Dorsolateral prefrontal cortex (tissue), 120 donors: ENCODE measurements at regions of chr17 and their contacts with region 1.

Region 1: GRCh38 chr17:76296186-76296585 is 11.9 kb downstream of the QRICH2 start:
- DNase-seq: no peak
- H3K4me3 ChIP-seq: no peak overlapping the region
- H3K27ac ChIP-seq: no peak overlapping the region
- H3K27me3 ChIP-seq: no peaks in the 10 kb centered on the region
- CTCF ChIP-seq: no peak

Region 2: DNA sequence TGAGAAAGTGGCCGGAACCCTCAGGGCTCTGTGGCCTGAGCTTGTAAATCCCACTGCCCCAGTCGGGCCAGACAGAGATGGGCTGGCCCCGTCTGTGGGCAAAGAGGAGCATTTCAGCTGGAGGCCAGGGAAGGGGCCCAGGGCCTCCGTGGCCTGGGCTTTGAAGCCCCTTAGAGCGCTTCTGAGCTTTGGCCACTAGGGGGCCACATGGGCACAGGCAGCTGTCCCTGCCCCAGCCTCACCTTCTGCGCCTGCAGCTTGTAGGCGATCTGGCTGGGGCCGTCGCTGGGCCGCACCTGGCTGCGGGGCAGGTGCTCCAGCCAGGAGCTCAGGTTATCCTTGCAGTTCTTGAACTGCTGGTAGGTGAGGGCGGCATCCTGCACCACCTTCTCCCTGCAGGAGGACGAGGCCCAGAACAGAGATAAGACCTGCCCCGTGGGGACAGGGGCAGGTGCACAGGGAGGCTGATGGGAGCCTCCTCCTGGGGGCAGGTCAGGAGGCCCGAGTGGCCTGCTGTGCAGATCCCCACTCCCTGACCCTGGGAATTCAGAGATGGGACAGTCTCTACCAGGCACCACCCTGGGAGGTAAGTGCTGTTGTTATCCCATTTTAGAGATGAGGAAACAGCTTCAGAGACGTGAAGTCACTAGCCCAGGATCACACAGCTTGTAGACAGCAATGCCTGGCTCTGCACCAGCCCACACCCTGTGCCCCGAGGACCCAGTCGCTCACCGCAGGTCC is 281.8 kb before region 1 on chr17:
- intact Hi-C with region 1: loop called (anchors 5 to 10 kb)
- DNase-seq: peak; percentile 39 to 76 (median 62)
- H3K4me3 ChIP-seq: no peak overlapping the region
- H3K27ac ChIP-seq: peak overlapping the region in 1 of 59 donors; percentile 27
- H3K27me3 ChIP-seq: no peaks in the 10 kb centered on the region
- CTCF ChIP-seq: peak; percentile 77 to 96 (median 92)